Common myeloid progenitor, CD34-positive (primary cell): ENCODE measurements at regions of chr11 and their contacts with region 1.

Region 1: DNA sequence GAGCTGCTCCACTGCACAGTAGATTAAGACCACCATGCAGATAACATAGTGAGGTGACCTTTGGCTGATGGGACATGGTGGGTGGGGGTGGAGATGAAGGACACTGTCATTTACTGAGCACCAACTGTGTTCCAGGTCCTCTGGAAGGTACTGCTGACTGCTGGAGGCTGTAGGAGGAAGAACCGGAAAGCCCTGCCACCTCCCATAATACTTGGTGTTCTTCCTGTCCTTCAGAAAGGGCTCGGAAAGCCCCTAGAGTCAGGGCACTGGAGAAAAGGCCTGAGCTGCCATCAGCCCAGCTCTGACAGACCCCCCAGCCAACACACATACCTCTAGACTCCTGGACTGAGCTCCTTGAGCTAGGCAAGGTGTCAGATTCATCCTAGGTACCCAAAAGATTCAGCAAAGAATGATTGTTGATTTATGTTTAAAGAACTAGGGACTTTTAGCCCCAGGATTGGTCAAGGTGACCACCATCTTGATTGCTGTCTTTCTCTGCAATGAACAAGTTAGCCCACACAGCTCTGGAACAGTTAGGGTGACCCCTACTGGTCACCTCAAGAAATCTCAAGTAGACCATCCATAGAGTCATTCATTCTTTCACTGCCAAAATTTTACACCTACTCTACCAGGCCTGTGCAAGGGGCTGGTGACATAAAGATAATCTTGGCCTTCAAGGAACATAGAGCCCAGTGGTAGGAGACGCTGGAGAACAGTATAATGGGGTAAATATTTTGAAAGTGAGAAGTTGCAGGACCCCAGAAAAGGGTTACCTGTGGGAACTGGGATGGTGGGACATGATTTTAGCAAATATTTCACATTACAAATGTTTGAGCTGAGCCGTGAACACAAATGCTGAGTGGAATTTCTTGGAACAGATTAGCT is 39.4 kb downstream of the IRAG1 start:
- DNase-seq: peak; percentile 64 to 76 (median 66)
- H3K4me3 ChIP-seq: no peak overlapping the region
- H3K27ac ChIP-seq: no peak overlapping the region
- H3K4me1 ChIP-seq: peaks cover 6 to 40% (median 34%) of the 10 kb centered on the region in 4 experiments
- H3K27me3 ChIP-seq: no peaks in the 10 kb centered on the region

Region 2: DNA sequence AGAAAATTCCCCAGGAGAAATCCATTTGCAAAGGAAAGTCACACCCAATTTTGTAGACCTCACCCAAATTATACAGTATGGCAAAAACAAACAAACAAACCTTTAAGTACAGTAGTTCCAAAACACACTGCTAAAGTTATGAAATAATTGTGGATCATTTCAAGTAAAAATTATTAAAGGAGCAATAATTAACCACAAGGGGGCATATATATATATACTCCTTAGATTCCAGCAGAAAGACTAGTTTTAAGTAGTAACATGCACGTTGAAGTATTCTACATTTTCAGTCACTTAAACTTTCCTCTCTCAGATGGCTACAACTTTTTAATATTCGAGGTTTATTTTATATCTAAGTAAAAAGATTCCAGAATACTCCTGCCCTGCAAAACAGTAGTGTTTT is 140.0 kb before region 1 on chr11:
- CTCF ChIA-PET with region 1: interaction called, 12 read pairs
- POLR2A ChIA-PET with region 1: no interaction called
- DNase-seq: peak in 2 of 3 donors; percentile 51 to 53
- H3K4me3 ChIP-seq: no peak overlapping the region
- H3K27ac ChIP-seq: no peak overlapping the region
- H3K4me1 ChIP-seq: no peaks in the 10 kb centered on the region
- H3K27me3 ChIP-seq: no peaks in the 10 kb centered on the region

Region 3: DNA sequence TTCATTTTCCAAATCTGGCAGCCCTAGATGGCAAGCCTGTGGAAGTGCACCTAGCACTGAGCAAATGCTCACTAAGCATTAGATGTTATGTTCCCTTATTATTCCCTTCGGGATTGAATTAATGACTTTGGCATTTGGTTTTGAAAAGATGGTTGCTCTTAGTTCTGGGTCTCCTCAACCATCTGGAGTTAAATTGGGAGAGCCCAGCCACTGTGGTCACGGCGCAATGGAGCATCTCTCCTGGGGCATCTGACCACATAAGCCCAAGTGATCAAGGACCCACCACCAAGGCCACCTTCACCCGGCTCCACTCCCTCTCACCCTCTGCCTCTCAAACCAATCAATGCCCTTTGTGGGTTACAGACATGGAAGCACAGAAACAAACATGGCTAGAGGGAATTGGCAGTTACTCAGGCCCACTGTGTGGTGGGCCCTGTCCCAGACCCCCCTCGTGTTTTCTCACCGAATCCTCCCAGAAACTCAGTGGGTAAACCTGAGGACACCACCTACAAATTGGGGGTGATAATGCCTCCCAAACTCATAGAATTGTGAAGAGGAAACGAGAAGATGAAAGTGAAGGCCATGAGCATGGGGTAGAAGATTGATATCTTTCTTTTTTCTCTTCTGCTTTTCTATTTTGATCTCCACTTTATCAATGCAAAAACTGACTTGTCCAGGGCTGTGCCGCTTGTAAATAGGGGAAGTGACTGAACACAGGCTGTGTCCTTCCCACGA is 12.8 kb before region 1 on chr11:
- CTCF ChIA-PET with region 1: interaction called, 22 read pairs
- POLR2A ChIA-PET with region 1: no interaction called
- DNase-seq: peak; percentile 34 to 91 (median 85)
- H3K4me3 ChIP-seq: peak overlapping the region in 1 of 7 experiments; percentile 41
- H3K27ac ChIP-seq: peak overlapping the region in 1 of 2 experiments; percentile 46
- H3K4me1 ChIP-seq: peaks cover 28 to 45% (median 36%) of the 10 kb centered on the region in 4 experiments
- H3K27me3 ChIP-seq: no peaks in the 10 kb centered on the region

Region 4: DNA sequence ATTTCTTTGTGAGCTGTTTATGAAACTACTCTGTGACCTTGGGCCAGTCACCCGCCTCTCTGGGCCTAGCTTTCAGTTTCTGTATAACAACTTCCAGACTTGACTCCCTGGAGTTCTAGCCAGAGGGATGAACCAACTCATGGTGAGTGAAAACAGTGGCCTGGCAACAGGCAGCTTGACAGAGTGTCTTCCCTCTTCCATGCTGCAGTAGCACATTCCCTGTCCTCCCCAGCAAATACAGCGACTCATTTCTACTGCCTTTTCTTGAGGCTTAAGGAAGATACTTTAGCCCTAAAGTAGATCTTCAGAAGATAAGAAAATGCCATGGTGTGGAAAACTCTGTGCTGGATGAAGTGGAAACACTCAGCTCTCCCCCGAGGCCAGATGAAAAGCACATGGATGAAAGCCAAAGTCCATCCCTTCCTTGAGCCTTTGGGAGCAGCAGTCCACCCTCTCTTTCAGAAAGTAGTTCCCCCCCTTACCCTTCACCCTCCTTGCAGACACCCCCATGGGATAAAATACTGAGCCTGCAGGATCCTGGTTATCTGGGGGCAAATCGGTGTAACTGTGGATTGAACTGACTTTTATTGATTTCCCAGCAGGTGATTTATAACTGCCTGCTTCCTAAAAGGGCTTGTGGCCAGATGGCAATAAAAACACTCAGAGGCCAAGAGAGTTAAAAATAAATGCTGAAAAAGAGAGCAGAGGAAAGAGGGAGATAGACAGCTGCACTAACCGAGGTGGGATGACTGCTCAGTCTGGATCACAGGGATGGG is 15.3 kb after region 1 on chr11:
- CTCF ChIA-PET with region 1: interaction called, 59 read pairs
- POLR2A ChIA-PET with region 1: no interaction called
- DNase-seq: peak in 1 of 3 donors; percentile 34
- H3K4me3 ChIP-seq: no peak overlapping the region
- H3K27ac ChIP-seq: no peak overlapping the region
- H3K4me1 ChIP-seq: peaks cover 6 to 56% (median 39%) of the 10 kb centered on the region in 4 experiments
- H3K27me3 ChIP-seq: no peaks in the 10 kb centered on the region

Region 5: GRCh38 chr11:10725114-10725906 is 71.1 kb after region 1 on chr11:
- CTCF ChIA-PET with region 1: interaction called, 11 read pairs
- POLR2A ChIA-PET with region 1: no interaction called
- DNase-seq: peak in 2 of 3 donors; percentile 88 to 89
- H3K4me3 ChIP-seq: no peak overlapping the region
- H3K27ac ChIP-seq: no peak overlapping the region
- H3K4me1 ChIP-seq: peaks cover 2 to 39% (median 34%) of the 10 kb centered on the region in 4 experiments
- H3K27me3 ChIP-seq: no peaks in the 10 kb centered on the region